ENCODE measurements at regions of chr3 and their contacts with region 1.

Region 1: GRCh38 chr3:186783073-186783730 is at the start of gene EIF4A2:
- DNase-seq: peak; percentile 90 to 91
- ATAC-seq: peak; percentile 85 to 95 (median 92)
- H3K4me3 ChIP-seq: peak within 1 kb of the TSS; percentile 75 to 95 (median 90)
- H3K27ac ChIP-seq: peak within 1 kb of the TSS; percentile 98 to 100 (median 98)
- H3K4me1 ChIP-seq: peaks cover 3 to 49% (median 39%) of the 10 kb centered on the region in 9 donors
- H3K27me3 ChIP-seq: no peaks in the 10 kb centered on the region
- CTCF ChIP-seq: no peak
- total RNA-seq, gene EIF4A2: 314 to 476 (median 439) TPM

Region 2: DNA sequence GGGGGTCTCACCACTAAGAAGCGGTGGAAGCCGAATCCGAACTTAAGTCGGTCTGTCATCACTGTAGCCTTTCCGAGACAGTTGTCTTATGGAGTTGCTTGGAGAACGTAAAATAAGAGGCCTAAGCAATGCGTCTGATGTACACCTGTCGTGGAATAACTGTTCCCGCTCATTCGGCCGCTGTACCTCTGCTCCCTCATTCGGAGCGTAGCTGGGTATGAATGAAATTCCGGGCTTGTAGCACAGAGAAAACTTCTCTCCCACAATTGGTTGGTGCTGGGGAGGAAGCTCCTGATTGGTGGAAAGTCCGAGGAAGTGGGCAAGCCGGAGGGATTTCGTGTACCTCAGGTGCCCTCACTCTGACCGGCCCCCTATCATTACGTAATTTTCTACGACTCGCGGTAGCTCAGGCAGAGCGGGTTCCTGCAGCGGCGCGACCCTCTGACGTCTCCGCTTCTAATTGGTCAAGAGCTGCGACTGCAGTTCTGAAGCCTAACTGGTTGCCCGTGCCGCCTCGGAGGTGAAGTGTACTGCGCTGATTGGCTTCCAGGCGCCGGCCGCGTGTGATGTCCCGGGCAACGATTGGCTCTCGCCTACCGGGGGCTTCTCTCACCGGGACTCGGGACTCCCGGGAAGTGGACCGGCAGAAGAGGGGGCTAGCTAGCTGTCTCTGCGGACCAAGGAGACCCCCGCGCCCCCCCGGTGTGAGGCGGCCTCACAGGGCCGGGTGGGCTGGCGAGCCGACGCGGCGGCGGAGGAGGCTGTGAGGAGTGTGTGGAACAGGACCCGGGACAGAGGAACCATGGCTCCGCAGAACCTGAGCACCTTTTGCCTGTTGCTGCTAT is 212.9 kb before region 1 on chr3 and contains the start of gene DNAJB11:
- intact Hi-C with region 1: loop called in 2 of 10 experiments (anchors 5 kb)
- DNase-seq: peak; percentile 98 to 99
- ATAC-seq: peak; percentile 94 to 97 (median 96)
- H3K4me3 ChIP-seq: peak within 1 kb of the TSS; percentile 65 to 95 (median 86)
- H3K27ac ChIP-seq: peak within 1 kb of the TSS; percentile 43 to 95 (median 91)
- H3K4me1 ChIP-seq: peaks cover 0 to 48% (median 42%) of the 10 kb centered on the region in 9 donors
- H3K27me3 ChIP-seq: no peaks in the 10 kb centered on the region
- CTCF ChIP-seq: no peak
- total RNA-seq, gene DNAJB11: 17.9 to 39.9 (median 23.9) TPM

Region 3: GRCh38 chr3:186806089-186807055 is 23.2 kb after region 1 on chr3 and contains the start of gene RFC4:
- intact Hi-C with region 1: loop called in 1 of 10 experiments (anchors 2 kb)
- DNase-seq: peak; percentile 85 to 86
- ATAC-seq: peak; percentile 90 to 99 (median 98)
- H3K4me3 ChIP-seq: peak within 1 kb of the TSS; percentile 53 to 91 (median 84)
- H3K27ac ChIP-seq: peak within 1 kb of the TSS in 9 of 10 donors; percentile 73 to 91 (median 83)
- H3K4me1 ChIP-seq: peaks cover 0 to 22% (median 19%) of the 10 kb centered on the region in 9 donors
- H3K27me3 ChIP-seq: peaks cover 0 to 6% (median 0%) of the 10 kb centered on the region in 7 donors
- CTCF ChIP-seq: no peak
- total RNA-seq, gene RFC4: 5.8 to 10.6 (median 8.0) TPM

Measured in heart right ventricle (tissue), 16 donors.